A673 (cell line): ENCODE measurements at regions of chr4 and their contacts with region 1.

Region 1: GRCh38 chr4:185304944-185305690 is 90.6 kb downstream of the LRP2BP start:
- DNase-seq: peak; percentile 58
- H3K4me3 ChIP-seq: no peak overlapping the region
- H3K27ac ChIP-seq: no peak overlapping the region
- H3K4me1 ChIP-seq: no peaks in the 10 kb centered on the region
- H3K27me3 ChIP-seq: no peaks in the 10 kb centered on the region
- CTCF ChIP-seq: peak; percentile 64

Region 2: GRCh38 chr4:185219551-185220344 is 85.4 kb before region 1 on chr4:
- CTCF ChIA-PET with region 1: no interaction called
- POLR2A ChIA-PET with region 1: no interaction called
- intact Hi-C with region 1: loop called (anchors 5 kb)
- DNase-seq: peak; percentile 87
- H3K4me3 ChIP-seq: peak overlapping the region; percentile 8
- H3K27ac ChIP-seq: no peak overlapping the region
- H3K4me1 ChIP-seq: peaks cover 42% of the 10 kb centered on the region
- H3K27me3 ChIP-seq: no peaks in the 10 kb centered on the region
- CTCF ChIP-seq: no peak

Region 3: GRCh38 chr4:185597532-185598188 is 292.5 kb after region 1 on chr4:
- CTCF ChIA-PET with region 1: interaction called, 13 read pairs
- POLR2A ChIA-PET with region 1: no interaction called
- intact Hi-C with region 1: no loop called
- DNase-seq: peak; percentile 72
- H3K4me3 ChIP-seq: no peak overlapping the region
- H3K27ac ChIP-seq: no peak overlapping the region
- H3K4me1 ChIP-seq: no peaks in the 10 kb centered on the region
- H3K27me3 ChIP-seq: peaks cover 26% of the 10 kb centered on the region
- CTCF ChIP-seq: peak; percentile 99